ENCODE measurements at regions of chr2 and their contacts with region 1.

Region 1: DNA sequence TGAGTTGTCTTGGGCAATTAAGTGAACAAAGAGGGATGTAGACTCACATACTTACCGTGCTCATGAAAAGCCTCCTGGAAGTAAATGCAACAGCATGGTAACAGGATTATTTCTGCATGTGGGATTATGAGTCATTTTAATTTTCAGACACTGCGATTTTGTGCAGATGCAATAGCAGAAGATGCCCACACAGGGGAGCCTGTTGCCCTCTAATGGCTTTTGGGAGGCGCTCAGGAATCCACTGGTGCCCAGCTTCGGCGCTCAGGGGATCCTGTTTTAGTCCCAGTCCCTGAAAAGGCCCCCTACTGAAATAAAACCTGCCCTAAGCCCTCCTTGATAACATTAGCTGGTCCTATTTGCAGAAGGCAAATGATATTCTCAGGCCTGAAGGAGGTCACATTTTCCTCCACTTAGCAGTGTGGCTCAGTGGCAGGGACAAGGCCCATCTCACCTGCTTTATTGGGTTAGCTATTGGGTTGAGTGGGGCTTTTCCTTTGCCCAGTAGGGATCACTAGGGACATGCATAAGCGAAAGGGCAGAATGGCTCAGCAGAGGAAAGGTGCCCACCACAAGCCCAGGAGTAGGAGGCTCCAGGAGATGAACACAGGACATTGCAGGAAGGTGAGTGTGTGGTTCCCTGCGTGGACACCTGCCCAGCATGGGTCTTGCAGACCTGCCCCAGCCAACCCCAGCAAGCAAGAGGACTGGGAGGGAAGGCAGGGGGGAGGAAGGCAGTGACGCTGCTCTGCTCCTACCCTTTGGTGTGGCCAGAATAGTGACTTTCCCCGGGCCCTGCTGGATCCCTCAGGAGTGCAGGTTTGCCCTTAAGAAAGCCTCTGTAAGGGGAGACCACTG is 26.5 kb upstream of the KCNS3 start:
- DNase-seq: peak; percentile 79
- H3K4me3 Mint-ChIP-seq: no peak overlapping the region
- H3K27ac Mint-ChIP-seq: peak overlapping the region; percentile 66
- H3K4me1 Mint-ChIP-seq: peaks cover 10% of the 10 kb centered on the region
- H3K27me3 Mint-ChIP-seq: peaks cover 32% of the 10 kb centered on the region
- CTCF ChIP-seq: peak; percentile 98

Region 2: GRCh38 chr2:17470855-17471641 is 380.9 kb before region 1 on chr2:
- CTCF ChIA-PET with region 1: no interaction called
- POLR2A ChIA-PET with region 1: no interaction called
- intact Hi-C with region 1: loop called (anchors 10 kb)
- DNase-seq: peak; percentile 76
- H3K4me3 Mint-ChIP-seq: no peak overlapping the region
- H3K27ac Mint-ChIP-seq: no peak overlapping the region
- H3K4me1 Mint-ChIP-seq: peaks cover 8% of the 10 kb centered on the region
- H3K27me3 Mint-ChIP-seq: no peaks in the 10 kb centered on the region
- CTCF ChIP-seq: peak; percentile 53

Region 3: GRCh38 chr2:17830053-17831034 is 21.6 kb before region 1 on chr2:
- CTCF ChIA-PET with region 1: interaction called, 12 read pairs
- POLR2A ChIA-PET with region 1: no interaction called
- intact Hi-C with region 1: no loop called
- DNase-seq: peak; percentile 83
- H3K4me3 Mint-ChIP-seq: peak overlapping the region; percentile 48
- H3K27ac Mint-ChIP-seq: no peak overlapping the region
- H3K4me1 Mint-ChIP-seq: peaks cover 6% of the 10 kb centered on the region
- H3K27me3 Mint-ChIP-seq: no peaks in the 10 kb centered on the region
- CTCF ChIP-seq: peak; percentile 86

Region 4: GRCh38 chr2:17918789-17919188 is 66.8 kb after region 1 on chr2:
- CTCF ChIA-PET with region 1: interaction called, 10 read pairs
- POLR2A ChIA-PET with region 1: no interaction called
- intact Hi-C with region 1: no loop called
- DNase-seq: peak; percentile 21
- H3K4me3 Mint-ChIP-seq: no peak overlapping the region
- H3K27ac Mint-ChIP-seq: no peak overlapping the region
- H3K4me1 Mint-ChIP-seq: no peaks in the 10 kb centered on the region
- H3K27me3 Mint-ChIP-seq: no peaks in the 10 kb centered on the region
- CTCF ChIP-seq: no peak

Region 5: DNA sequence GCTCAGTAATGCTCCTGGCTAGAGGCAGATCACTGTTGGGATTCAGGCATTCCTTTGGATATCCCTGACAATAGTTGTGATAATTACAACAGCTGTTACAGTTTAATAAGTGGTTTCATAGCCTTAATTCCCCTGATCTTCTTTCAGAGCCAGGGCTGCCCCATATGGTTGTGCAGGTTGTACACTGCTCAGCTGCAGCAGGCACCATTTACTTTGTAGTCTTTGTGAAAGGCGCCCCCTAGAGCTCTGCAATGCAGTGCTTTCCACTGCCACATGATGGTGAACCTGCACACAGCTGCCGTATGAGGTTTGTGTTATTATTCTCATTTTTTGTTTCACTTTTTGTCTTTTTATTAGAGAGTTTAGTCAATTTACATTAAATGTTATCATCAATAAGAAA is 265.6 kb after region 1 on chr2:
- CTCF ChIA-PET with region 1: interaction called, 10 read pairs
- POLR2A ChIA-PET with region 1: no interaction called
- intact Hi-C with region 1: loop called (anchors 1 kb)
- DNase-seq: peak; percentile 72
- H3K4me3 Mint-ChIP-seq: no peak overlapping the region
- H3K27ac Mint-ChIP-seq: no peak overlapping the region
- H3K4me1 Mint-ChIP-seq: no peaks in the 10 kb centered on the region
- H3K27me3 Mint-ChIP-seq: peaks cover 34% of the 10 kb centered on the region
- CTCF ChIP-seq: peak; percentile 92

Region 6: DNA sequence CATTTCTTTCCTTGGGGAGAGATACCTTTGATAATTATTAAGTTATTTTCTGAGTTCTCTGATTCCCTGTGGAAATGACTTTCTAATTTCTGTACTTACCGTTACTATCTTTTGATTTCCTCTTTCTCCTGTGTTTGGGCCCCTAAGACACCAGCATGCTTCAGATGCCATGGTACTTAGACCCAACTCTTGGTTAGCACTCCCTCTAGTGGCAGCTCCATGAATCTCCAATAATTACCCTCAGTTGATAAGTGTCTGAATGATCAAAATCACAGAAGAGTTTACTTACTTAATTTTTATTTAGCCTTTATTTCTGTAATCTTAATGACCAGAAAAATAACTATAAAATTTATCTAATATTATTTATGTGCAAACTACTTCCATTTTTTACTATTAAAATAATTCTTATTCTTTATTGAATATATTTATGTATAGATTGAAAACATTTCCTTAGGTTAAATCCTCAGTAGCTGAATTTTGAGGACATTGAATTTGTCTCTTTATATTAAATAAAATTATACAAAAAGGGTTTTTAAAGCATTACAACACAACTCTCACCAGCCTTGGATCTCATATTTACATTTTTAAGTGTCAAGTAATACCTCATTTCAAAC is 326.9 kb after region 1 on chr2:
- CTCF ChIA-PET with region 1: interaction called, 74 read pairs
- POLR2A ChIA-PET with region 1: no interaction called
- intact Hi-C with region 1: loop called (anchors 1 kb)
- DNase-seq: peak; percentile 74
- H3K4me3 Mint-ChIP-seq: no peak overlapping the region
- H3K27ac Mint-ChIP-seq: no peak overlapping the region
- H3K4me1 Mint-ChIP-seq: no peaks in the 10 kb centered on the region
- H3K27me3 Mint-ChIP-seq: peaks cover 11% of the 10 kb centered on the region
- CTCF ChIP-seq: peak; percentile 77

Region 7: DNA sequence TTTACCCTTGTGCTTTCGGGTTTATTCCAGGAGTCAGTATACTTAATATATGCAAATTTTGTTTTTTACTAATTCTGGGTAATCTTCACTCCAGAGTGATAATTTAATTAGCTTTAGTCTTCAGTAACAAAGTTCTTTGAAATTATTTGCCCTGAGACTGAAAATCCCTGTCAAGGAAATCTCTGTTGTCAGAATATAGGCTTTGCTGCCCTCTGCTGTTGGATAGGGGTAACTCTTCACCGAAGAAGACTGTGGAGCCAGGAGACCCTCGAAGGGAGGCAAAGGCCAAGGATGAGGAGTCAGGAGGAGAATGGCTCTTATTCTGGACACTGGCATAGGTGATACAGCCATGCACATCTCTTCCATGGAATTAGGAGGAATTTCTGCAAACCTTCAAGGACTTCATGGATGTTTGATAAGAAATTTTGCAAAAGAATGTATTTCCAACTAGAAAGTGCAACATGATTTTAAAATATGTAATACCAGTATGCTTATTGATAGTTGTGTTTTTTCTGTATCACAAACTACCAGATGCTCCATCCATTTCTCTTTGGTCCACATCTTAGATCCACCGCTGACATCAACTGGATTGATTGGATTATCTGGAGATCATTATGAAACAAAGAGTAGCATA is 526.2 kb after region 1 on chr2:
- CTCF ChIA-PET with region 1: interaction called, 144 read pairs
- POLR2A ChIA-PET with region 1: interaction called, 7 read pairs
- intact Hi-C with region 1: loop called (anchors 1 kb)
- DNase-seq: peak; percentile 66
- H3K4me3 Mint-ChIP-seq: no peak overlapping the region
- H3K27ac Mint-ChIP-seq: no peak overlapping the region
- H3K4me1 Mint-ChIP-seq: peaks cover 6% of the 10 kb centered on the region
- H3K27me3 Mint-ChIP-seq: peaks cover 13% of the 10 kb centered on the region
- CTCF ChIP-seq: peak; percentile 82

Measured in MCF 10A (cell line).